ENCODE measurements at regions of chr11 and their contacts with region 1.

Region 1: DNA sequence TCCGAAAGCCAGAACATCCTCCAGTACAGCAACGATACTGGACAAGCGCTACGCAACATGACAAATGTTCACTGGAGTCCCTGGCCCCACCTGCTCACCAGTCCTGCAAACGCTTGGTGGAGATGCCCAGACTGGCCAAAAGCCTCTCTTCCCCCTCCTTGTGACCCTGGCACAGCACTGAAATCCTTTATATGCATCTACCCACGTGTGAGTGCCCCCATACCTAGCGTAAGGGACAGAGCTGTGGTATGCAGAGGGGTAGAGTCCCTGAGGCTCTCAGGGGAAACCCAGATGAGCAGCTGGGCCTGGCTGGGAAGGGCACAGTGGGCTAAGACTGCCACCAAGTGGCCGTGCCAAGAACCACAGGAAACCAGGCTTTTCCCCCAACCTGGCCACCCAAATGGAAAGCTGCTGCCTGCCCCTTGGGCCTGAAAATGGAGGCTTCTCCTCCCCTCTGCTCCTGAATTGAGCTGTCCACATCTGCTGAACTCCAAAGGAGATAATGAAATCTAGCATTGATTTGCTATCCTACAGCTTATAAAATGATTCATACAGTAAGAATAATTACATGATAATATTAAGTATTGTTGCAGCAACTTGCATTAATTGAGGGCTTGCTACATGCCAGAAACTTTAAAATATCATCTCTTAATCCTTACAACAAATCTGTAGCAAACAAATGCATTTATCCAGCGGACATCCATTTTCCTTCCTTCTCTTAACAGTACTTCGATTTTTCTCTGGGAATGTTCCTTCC is 24.8 kb upstream of the TTC12 start:
- DNase-seq: peak; percentile 24 to 79 (median 48)
- ATAC-seq: peak; percentile 98
- H3K4me3 ChIP-seq: no peak overlapping the region
- H3K4me3 Mint-ChIP-seq: no peak overlapping the region
- H3K27ac ChIP-seq: no peak overlapping the region
- H3K27ac Mint-ChIP-seq: no peak overlapping the region
- H3K4me1 ChIP-seq: peaks cover 4% of the 10 kb centered on the region
- H3K4me1 Mint-ChIP-seq: no peaks in the 10 kb centered on the region
- H3K27me3 ChIP-seq: peaks cover 0 to 5% of the 10 kb centered on the region in 2 experiments
- H3K27me3 Mint-ChIP-seq: peaks cover 23% of the 10 kb centered on the region
- CTCF ChIP-seq: peak; percentile 74

Region 2: DNA sequence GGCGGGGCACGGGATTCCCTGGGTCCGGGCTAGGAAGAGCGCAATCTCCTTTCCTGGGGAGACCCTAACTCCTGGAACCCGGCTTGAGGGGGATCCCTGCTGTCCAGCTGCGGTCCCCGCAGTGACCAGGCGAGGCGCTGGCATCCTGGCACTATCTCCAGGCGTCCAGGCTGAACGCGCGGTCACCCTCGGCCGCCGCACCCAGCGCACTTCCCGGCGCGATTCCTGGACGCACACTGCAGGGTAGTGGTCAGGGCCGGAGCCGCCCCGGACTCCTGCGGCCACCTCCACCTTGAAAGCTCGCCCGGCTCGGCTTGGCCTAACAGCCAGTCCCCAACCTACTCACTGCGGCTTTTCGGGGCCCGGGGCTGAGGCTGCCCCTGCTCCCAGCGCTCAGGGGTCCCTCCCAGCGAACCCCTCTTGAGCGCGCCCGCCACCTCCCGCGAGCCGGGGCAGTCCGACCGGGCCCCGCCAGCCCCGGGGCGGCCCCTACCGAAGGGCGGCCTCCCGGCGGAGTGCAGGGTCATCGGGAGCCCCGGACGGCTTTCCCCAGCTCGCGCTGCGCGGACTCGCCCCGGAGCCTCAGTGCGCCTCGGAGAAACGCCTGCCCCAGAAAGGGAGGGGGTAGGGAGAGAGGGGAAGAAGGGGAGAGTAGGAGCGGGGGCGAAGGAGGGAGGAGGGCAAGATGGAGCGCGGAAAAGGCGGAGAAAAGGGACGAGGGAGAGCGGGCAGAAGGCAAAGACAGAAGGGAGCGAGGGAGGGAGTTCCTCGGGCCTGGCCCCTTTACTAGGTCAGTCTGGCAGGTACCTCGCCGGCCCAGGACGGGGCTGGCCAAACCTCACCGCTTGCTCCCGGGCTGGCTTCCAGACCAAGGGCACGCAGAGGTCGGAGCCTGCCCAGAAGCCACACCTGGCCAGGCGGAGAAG is 1990.2 kb before region 1 on chr11:
- CTCF ChIA-PET with region 1: no interaction called
- POLR2A ChIA-PET with region 1: no interaction called
- intact Hi-C with region 1: loop called in 1 of 2 experiments (anchors 5 kb)
- DNase-seq: no peak
- ATAC-seq: no peak
- H3K4me3 ChIP-seq: no peak overlapping the region
- H3K4me3 Mint-ChIP-seq: no peak overlapping the region
- H3K27ac ChIP-seq: no peak overlapping the region
- H3K27ac Mint-ChIP-seq: no peak overlapping the region
- H3K4me1 ChIP-seq: peaks cover 6% of the 10 kb centered on the region
- H3K4me1 Mint-ChIP-seq: peaks cover 5% of the 10 kb centered on the region
- H3K27me3 ChIP-seq: peaks cover 21 to 32% of the 10 kb centered on the region in 2 experiments
- H3K27me3 Mint-ChIP-seq: peaks cover 58% of the 10 kb centered on the region
- CTCF ChIP-seq: no peak

Region 3: DNA sequence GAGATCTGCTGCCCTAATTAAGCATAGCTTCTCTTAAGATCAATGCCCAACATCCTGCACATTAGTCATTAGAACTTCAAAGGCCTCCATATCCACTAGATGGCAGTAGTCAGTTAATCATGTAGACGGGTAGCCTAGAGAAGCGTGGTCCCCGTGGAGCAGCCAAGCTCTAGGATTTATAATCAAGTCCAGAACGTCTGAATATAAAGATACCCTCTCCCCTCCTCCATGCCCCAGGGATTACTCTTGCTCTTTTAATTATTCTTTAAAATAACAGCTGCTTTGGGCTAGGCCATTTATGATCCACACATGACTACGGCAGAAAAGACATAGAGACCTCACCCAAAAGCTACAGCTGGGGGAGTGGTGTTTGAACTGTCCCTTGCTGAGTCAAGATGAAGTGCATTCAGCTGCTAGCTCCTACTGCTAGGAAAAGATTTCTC is 701.3 kb before region 1 on chr11:
- CTCF ChIA-PET with region 1: interaction called, 6 read pairs
- POLR2A ChIA-PET with region 1: interaction called, 6 read pairs
- intact Hi-C with region 1: loop called (anchors 1 kb)
- DNase-seq: peak in 11 of 14 experiments; percentile 7 to 74 (median 16)
- ATAC-seq: peak; percentile 77
- H3K4me3 ChIP-seq: no peak overlapping the region
- H3K4me3 Mint-ChIP-seq: no peak overlapping the region
- H3K27ac ChIP-seq: no peak overlapping the region
- H3K27ac Mint-ChIP-seq: no peak overlapping the region
- H3K4me1 ChIP-seq: peaks cover 4% of the 10 kb centered on the region
- H3K4me1 Mint-ChIP-seq: peaks cover 5% of the 10 kb centered on the region
- H3K27me3 ChIP-seq: no peaks in the 10 kb centered on the region
- H3K27me3 Mint-ChIP-seq: no peaks in the 10 kb centered on the region
- CTCF ChIP-seq: peak; percentile 78

Region 4: GRCh38 chr11:113077379-113077778 is 212.2 kb before region 1 on chr11:
- CTCF ChIA-PET with region 1: no interaction called
- POLR2A ChIA-PET with region 1: no interaction called
- intact Hi-C with region 1: no loop called
- DNase-seq: no peak
- ATAC-seq: no peak
- H3K4me3 ChIP-seq: no peak overlapping the region
- H3K4me3 Mint-ChIP-seq: no peak overlapping the region
- H3K27ac ChIP-seq: no peak overlapping the region
- H3K27ac Mint-ChIP-seq: no peak overlapping the region
- H3K4me1 ChIP-seq: no peaks in the 10 kb centered on the region
- H3K4me1 Mint-ChIP-seq: no peaks in the 10 kb centered on the region
- H3K27me3 ChIP-seq: no peaks in the 10 kb centered on the region
- H3K27me3 Mint-ChIP-seq: peaks cover 4% of the 10 kb centered on the region
- CTCF ChIP-seq: no peak

Region 5: DNA sequence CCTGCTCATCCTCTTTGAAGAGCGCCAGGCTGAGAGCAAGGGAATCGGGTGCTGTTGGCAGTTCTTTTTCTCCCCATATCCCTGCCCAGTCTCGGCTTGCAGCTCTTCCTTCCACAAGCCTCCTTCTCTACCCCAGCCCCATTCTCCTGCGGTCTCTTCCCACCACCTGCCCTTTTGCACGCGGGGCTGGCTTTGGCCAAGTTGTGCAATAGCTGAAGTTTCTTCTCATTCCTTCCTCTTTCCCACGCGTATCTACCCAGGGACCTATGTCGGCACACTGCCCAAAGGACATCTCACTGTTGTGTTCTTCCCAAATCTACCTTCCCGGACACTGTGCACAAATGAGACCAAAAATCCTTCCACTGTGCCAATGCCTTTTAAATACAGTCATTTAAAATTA is 663.0 kb after region 1 on chr11:
- CTCF ChIA-PET with region 1: no interaction called
- POLR2A ChIA-PET with region 1: no interaction called
- intact Hi-C with region 1: no loop called
- DNase-seq: peak in 2 of 14 experiments; percentile 16
- ATAC-seq: no peak
- H3K4me3 ChIP-seq: no peak overlapping the region
- H3K4me3 Mint-ChIP-seq: no peak overlapping the region
- H3K27ac ChIP-seq: no peak overlapping the region
- H3K27ac Mint-ChIP-seq: no peak overlapping the region
- H3K4me1 ChIP-seq: no peaks in the 10 kb centered on the region
- H3K4me1 Mint-ChIP-seq: no peaks in the 10 kb centered on the region
- H3K27me3 ChIP-seq: peaks cover 4 to 8% of the 10 kb centered on the region in 2 experiments
- H3K27me3 Mint-ChIP-seq: peaks cover 39% of the 10 kb centered on the region
- CTCF ChIP-seq: no peak

Measured in CD4-positive, alpha-beta T cell (primary cell).